PC-9 (cell line): ENCODE measurements at regions of chrX and their contacts with region 1.

Region 1: DNA sequence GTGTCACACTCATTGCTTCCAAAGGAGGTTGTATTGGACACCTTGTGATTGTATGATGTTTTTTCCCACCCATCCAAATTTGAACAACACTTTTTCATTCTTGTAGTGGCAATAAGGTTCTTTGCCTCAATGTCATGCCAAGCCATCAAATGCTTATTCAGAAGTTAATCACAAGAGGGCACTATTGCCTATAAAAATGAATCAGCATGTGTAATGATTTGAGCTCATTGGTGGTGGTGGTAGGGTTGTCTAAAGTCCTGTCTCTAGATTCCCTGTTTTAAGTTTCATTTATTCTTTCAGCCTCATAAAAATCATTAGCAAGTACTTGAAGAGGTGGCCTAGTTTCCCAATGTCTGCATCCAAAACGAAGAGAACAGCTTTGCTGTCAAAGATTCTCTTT is 37.0 kb downstream of the IRS4 start:
- DNase-seq: no peak
- H3K4me3 ChIP-seq: no peak overlapping the region
- H3K27ac ChIP-seq: no peak overlapping the region
- H3K4me1 ChIP-seq: peaks cover 9% of the 10 kb centered on the region; the same call in 1 of the 2 replicates
- H3K27me3 ChIP-seq: no peaks in the 10 kb centered on the region
- CTCF ChIP-seq: peak; percentile 65

Region 2: DNA sequence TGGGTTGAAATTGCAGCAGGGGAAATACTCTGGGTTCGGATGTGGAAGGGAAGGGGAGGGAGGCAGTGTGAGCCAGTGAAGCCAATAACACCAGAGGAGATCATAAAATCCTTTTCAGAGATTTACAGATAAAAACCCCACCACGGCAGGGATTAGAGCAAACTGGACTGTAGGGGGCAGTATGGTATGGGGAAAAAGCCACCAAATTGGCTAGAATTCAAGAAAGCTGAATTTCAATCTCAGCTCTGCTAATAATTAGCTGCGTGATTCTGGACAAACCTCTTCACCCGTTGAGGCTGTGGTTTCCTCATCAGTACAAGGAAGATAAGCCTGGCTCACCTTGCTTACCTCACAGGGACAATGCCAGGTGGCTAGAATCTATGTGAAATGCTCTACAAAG is 499.7 kb before region 1 on chrX:
- CTCF ChIA-PET with region 1: no interaction called
- POLR2A ChIA-PET with region 1: no interaction called
- intact Hi-C with region 1: loop called (anchors 5 kb)
- DNase-seq: peak; percentile 43 to 44
- H3K4me3 ChIP-seq: no peak overlapping the region
- H3K27ac ChIP-seq: no peak overlapping the region
- H3K4me1 ChIP-seq: no peaks in the 10 kb centered on the region
- H3K27me3 ChIP-seq: no peaks in the 10 kb centered on the region
- CTCF ChIP-seq: peak; percentile 77

Region 3: GRCh38 chrX:109384699-109385098 is 685.3 kb after region 1 on chrX:
- CTCF ChIA-PET with region 1: interaction called, 5 read pairs
- POLR2A ChIA-PET with region 1: no interaction called
- intact Hi-C with region 1: loop called (anchors 10 kb)
- DNase-seq: no peak
- H3K4me3 ChIP-seq: no peak overlapping the region
- H3K27ac ChIP-seq: no peak overlapping the region
- H3K4me1 ChIP-seq: no peaks in the 10 kb centered on the region
- H3K27me3 ChIP-seq: peaks cover 6% of the 10 kb centered on the region; the same call in 1 of the 2 replicates
- CTCF ChIP-seq: peak; percentile 69

Region 4: DNA sequence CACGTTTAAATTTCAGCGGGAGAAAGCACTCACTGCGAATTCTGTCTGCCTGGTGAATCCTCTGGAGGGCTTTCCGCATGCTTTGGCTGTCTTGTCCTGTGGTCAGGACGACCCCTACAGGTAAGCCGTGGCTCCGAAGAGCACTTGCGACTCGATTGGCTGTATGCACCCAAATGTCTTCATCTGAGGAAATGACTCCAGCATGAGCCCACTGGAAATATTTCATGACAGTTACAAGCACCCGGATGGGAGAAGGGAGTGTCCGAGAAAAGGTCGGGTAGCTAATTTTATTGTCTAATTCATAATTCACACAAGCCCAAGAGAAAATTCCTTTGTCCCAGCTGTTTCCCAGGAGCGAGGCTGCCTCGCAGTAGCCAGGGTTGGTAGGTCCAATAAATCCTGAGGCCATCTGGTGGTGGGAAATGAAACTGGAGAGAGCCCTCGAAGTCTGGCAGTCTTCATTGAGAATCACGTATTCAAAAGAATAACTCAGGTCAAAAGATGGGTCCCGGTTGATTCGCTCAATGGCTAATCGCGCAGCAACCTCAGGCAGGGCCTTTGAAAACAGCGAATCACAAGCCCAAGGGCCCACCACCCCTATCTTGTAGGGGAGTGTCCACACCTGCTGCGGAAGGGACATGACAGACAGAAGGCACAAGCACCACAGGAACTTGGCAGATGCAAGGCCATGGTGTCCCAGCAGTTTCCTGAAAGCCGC is 776.0 kb after region 1 on chrX:
- CTCF ChIA-PET with region 1: interaction called, 3 read pairs
- POLR2A ChIA-PET with region 1: no interaction called
- intact Hi-C with region 1: loop called (anchors 5 kb)
- DNase-seq: peak in 1 of 2 experiments; percentile 26
- H3K4me3 ChIP-seq: no peak overlapping the region
- H3K27ac ChIP-seq: no peak overlapping the region
- H3K4me1 ChIP-seq: no peaks in the 10 kb centered on the region
- H3K27me3 ChIP-seq: peaks cover 25% of the 10 kb centered on the region
- CTCF ChIP-seq: peak; percentile 63

Region 5: DNA sequence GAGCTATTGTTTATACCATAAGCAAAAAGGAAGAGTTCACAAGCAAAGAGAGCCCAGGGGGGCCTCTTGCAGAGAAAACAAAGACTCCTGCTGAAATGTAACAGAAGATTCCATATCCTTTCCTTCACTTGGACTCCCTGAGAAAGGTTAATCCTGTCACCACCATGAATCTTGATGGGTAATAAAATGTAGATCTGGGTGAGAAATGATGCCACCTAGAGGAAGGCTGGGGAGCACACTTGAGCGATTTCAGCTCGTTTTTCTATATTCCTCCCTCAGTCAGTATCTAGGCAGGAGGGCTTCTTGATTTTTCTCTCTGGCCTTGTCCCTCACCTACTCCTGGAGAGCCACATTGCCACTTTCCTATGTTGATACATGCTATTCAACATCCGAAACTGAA is 935.8 kb after region 1 on chrX:
- CTCF ChIA-PET with region 1: no interaction called
- POLR2A ChIA-PET with region 1: no interaction called
- intact Hi-C with region 1: loop called (anchors 5 kb)
- DNase-seq: peak in 1 of 2 experiments; percentile 4
- H3K4me3 ChIP-seq: no peak overlapping the region
- H3K27ac ChIP-seq: no peak overlapping the region
- H3K4me1 ChIP-seq: no peaks in the 10 kb centered on the region
- H3K27me3 ChIP-seq: no peaks in the 10 kb centered on the region
- CTCF ChIP-seq: peak; percentile 71